GM10248 (cell line): ENCODE measurements at regions of chr5 and their contacts with region 1.

Region 1: GRCh38 chr5:66814146-66814991 is 218.2 kb downstream of the MAST4 start:
- DNase-seq: peak; percentile 53
- CTCF ChIP-seq: peak; percentile 63

Region 2: DNA sequence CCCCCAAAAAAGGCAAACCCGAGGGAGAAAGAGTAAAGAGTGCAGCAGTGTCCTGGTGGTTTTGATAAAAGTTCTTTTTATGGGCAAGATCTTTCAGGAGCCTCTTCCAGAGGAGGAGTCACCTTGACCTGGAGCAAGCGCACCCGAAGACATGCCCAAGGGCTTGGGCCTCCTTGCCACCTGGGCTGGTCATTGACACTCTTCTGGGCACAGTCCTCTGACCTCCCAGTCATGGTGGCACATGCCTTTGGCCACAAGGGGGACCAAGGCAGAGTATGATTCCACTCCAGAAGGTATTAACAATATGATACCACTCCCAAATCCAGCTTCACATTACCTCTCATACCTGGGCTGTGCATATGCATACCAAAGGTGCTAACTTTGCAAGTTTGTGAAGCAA is 133.6 kb before region 1 on chr5:
- CTCF ChIA-PET with region 1: no interaction called
- POLR2A ChIA-PET with region 1: no interaction called
- DNase-seq: no peak
- CTCF ChIP-seq: peak; percentile 16

Region 3: DNA sequence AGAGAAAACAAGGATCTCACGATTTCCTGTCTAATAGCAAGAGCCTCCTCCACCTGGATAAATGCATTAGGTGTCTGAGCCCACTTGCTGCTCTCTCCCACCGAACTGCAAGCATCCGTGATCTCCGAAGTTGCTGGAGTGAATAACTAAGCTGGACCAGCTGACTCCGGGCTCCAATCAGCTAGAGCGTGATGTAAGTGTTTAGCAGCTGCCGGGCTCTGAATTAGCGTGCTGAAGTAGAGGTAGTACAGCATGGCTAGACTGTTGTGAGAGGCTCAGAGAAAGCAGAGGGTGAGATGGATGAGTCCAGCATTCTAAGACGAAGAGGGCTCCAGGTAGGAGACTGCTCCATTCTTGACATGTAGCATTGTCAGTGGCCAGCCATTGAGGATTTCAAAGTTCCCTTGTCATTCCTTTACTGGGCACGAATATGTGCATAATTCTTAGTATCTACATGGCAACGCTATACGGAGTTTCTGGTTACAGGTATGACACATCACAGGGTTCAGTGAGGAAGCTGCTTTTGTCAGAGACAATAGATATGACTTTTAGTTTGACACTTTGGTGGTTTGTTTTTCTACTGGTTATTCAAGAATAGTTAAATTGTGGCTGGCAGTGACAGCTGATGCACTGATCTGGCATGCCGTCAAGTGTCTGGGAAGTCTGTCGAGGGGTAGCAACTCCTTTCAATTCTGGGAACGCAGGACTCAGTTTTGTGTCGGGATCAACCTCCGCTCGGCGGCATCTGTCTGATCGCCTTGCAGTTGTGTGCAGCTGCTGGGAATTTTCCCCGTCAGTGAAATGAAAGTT is 14.4 kb after region 1 on chr5:
- CTCF ChIA-PET with region 1: interaction called, 23 read pairs
- POLR2A ChIA-PET with region 1: no interaction called
- DNase-seq: no peak
- CTCF ChIP-seq: no peak

Region 4: GRCh38 chr5:66864331-66864840 is 50.0 kb after region 1 on chr5:
- CTCF ChIA-PET with region 1: interaction called, 24 read pairs
- POLR2A ChIA-PET with region 1: interaction called, 4 read pairs
- DNase-seq: peak; percentile 13
- CTCF ChIP-seq: peak; percentile 61